GM12878 (cell line): ENCODE measurements at regions of chr4 and their contacts with region 1.

Region 1: GRCh38 chr4:14152834-14153519 is 525.5 kb upstream of the BOD1L1 start:
- DNase-seq: no peak
- ATAC-seq: peak; percentile 84
- H3K4me3 ChIP-seq: no peak overlapping the region
- H3K27ac ChIP-seq: no peak overlapping the region; the same call in 1 of the 2 replicates
- H3K4me1 ChIP-seq: peaks cover 24% of the 10 kb centered on the region
- H3K27me3 ChIP-seq: no peaks in the 10 kb centered on the region
- CTCF ChIP-seq: no peak
- EP300 ChIP-seq: peak; percentile 18 to 58; a peak in 1 of 4 replicates
- POLR2A ChIP-seq: no peak
- RAD21 ChIP-seq: no peak

Region 2: DNA sequence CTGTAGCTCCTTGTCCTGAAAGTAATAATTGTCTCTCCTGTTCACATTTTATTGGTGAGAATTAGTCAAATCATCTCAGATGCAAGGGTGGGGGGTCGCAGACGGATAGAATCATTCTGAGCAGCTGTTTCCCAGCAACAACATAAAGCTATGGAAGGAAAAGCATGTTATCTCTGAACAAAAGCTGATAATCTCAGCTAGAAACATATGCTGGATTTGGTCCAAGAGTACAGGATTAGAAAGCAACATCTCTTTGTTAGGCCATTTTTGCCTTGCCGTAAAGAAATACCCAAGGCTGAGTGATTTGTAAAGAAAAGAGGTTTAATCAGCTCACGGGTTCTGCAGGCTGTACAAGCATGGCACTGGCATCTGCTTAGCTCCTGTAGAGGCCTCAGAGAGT is 52.6 kb before region 1 on chr4:
- CTCF ChIA-PET with region 1: no interaction called
- POLR2A ChIA-PET with region 1: no interaction called
- RAD21 ChIA-PET with region 1: no interaction called
- SMC1A ChIA-PET with region 1: no interaction called
- in situ Hi-C with region 1: no loop called
- intact Hi-C with region 1: no loop called
- DNase-seq: no peak
- ATAC-seq: no peak
- H3K4me3 ChIP-seq: no peak overlapping the region
- H3K27ac ChIP-seq: no peak overlapping the region
- H3K4me1 ChIP-seq: no peaks in the 10 kb centered on the region
- H3K27me3 ChIP-seq: no peaks in the 10 kb centered on the region; a peak in 1 of 4 replicates
- CTCF ChIP-seq: no peak
- EP300 ChIP-seq: no peak
- POLR2A ChIP-seq: no peak
- RAD21 ChIP-seq: no peak

Region 3: DNA sequence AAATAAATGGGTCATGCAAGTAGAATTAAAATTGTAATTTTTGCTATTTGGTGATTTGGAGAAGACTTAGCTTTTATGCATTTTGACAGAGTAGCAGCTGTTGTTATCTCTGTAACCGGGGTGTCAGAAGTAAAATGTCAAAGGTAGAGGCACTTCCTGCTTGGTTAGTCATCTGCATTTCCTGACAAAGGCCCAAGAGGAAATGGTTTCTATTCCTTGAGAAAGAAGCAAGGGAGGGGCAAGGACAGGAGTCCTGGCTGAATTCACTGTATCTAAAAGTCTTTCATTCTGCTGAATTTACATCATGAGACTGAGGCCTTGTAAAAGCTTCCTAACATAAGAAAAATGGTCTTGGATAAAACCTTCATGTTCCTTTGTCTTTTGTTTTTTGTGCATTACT is 25.4 kb after region 1 on chr4:
- CTCF ChIA-PET with region 1: interaction called, 6 read pairs
- POLR2A ChIA-PET with region 1: interaction called, 10 read pairs
- RAD21 ChIA-PET with region 1: interaction called, 22 read pairs
- SMC1A ChIA-PET with region 1: interaction called, 21 read pairs
- in situ Hi-C with region 1: no loop called
- intact Hi-C with region 1: no loop called
- DNase-seq: peak; percentile 61
- ATAC-seq: peak; percentile 67
- H3K4me3 ChIP-seq: no peak overlapping the region; the same call in 1 of the 2 replicates
- H3K27ac ChIP-seq: peak overlapping the region; percentile 87
- H3K4me1 ChIP-seq: peaks cover 21% of the 10 kb centered on the region
- H3K27me3 ChIP-seq: no peaks in the 10 kb centered on the region
- CTCF ChIP-seq: no peak
- EP300 ChIP-seq: peak in 1 of 2 experiments; percentile 26; a peak in 1 of 4 replicates
- POLR2A ChIP-seq: no peak
- RAD21 ChIP-seq: no peak